ENCODE measurements at regions of chr10 and their contacts with region 1.

Region 1: GRCh38 chr10:6144406-6145165 is 55.8 kb downstream of the RBM17 start:
- DNase-seq: peak; percentile 76
- H3K4me3 ChIP-seq: peak overlapping the region; percentile 81 to 92 (median 87)
- H3K27ac ChIP-seq: peak overlapping the region; percentile 70
- H3K4me1 ChIP-seq: peaks cover 9% of the 10 kb centered on the region
- H3K27me3 ChIP-seq: no peaks in the 10 kb centered on the region
- CTCF ChIP-seq: no peak

Region 2: DNA sequence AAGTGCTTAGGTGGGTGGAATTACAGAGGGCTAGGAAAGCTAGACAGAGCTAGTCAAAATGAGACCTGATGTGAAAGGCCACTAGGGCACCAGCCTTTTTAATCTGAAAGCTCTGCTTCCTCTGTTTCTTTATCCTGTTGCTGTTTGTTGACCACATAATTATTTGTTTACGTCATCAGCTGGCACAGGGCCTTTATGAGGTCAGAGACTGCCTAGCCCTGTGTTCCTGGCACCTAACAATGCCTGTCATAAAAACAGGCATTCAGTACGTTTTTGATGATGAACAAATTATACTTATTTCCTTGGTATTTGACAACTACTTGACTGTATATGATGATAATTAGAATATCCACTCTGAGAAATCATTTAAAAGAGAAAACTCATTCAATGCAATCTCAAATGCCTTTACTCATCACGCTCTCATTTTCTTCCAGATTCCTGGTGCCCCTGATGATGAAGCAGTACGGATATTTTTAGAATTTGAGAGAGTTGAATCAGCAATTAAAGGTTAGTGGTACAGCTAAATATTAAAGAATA is 29.7 kb before region 1 on chr10:
- CTCF ChIA-PET with region 1: no interaction called
- dilution Hi-C with region 1: loop called (anchors 5 kb)
- in situ Hi-C with region 1: no loop called
- intact Hi-C with region 1: no loop called
- DNase-seq: no peak
- H3K4me3 ChIP-seq: no peak overlapping the region
- H3K27ac ChIP-seq: no peak overlapping the region
- H3K4me1 ChIP-seq: peaks cover 6% of the 10 kb centered on the region
- H3K27me3 ChIP-seq: no peaks in the 10 kb centered on the region
- CTCF ChIP-seq: no peak

Measured in mammary epithelial cell (primary cell).